CD8-positive, alpha-beta memory T cell (primary cell): ENCODE measurements at regions of chr10 and their contacts with region 1.

Region 1: DNA sequence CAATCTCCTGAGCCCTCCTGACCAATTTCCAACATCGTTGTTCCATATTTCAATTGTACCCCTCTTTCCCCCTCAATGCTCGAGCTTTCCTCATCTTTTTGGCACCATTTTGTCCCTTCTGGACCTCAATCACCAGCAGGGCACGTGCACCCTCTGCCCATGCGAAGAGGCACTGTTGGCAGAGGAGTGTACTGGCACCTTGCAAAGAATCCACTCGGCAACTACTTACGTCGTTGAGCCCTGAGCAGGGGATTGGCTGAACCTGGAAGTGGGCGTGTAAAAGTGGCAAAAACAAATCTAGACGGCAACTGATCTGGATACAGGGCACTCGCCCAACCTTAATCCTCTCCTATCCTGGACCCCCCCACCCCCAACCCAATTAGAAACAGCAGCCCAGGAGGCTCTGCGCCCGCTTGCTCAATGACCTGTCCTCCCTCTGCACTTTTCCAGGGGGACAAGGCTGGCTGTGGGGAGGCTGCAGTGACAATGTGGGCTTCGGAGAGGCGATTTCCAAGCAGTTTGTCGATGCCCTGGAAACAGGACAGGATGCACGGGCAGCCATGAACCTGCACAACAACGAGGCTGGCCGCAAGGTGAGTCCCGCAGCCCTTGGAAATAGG is 18.8 kb downstream of the WNT8B start:
- DNase-seq: peak; percentile 75 to 92 (median 88)
- H3K4me3 ChIP-seq: peak overlapping the region; percentile 60
- H3K4me3 Mint-ChIP-seq: peak overlapping the region; percentile 15 to 93 (median 78)
- H3K27ac ChIP-seq: no peak overlapping the region
- H3K27ac Mint-ChIP-seq: peak overlapping the region in 3 of 8 donors; percentile 21 to 53 (median 52)
- H3K4me1 ChIP-seq: no peaks in the 10 kb centered on the region
- H3K4me1 Mint-ChIP-seq: peaks cover 11 to 15% (median 12%) of the 10 kb centered on the region in 3 donors
- H3K27me3 ChIP-seq: peaks cover 7% of the 10 kb centered on the region
- H3K27me3 Mint-ChIP-seq: peaks cover 12 to 27% of the 10 kb centered on the region in 2 donors

Region 2: GRCh38 chr10:100046021-100046486 is 435.5 kb before region 1 on chr10:
- CTCF ChIA-PET with region 1: no interaction called
- POLR2A ChIA-PET with region 1: no interaction called
- DNase-seq: peak; percentile 52 to 83 (median 68)
- H3K4me3 ChIP-seq: no peak overlapping the region
- H3K4me3 Mint-ChIP-seq: peak overlapping the region in 1 of 7 donors; percentile 18
- H3K27ac ChIP-seq: no peak overlapping the region
- H3K27ac Mint-ChIP-seq: no peak overlapping the region
- H3K4me1 ChIP-seq: no peaks in the 10 kb centered on the region
- H3K4me1 Mint-ChIP-seq: no peaks in the 10 kb centered on the region
- H3K27me3 ChIP-seq: no peaks in the 10 kb centered on the region
- H3K27me3 Mint-ChIP-seq: peaks cover 1 to 16% of the 10 kb centered on the region in 2 donors

Region 3: GRCh38 chr10:100501423-100501822 is 19.9 kb after region 1 on chr10:
- CTCF ChIA-PET with region 1: interaction called, 42 read pairs
- POLR2A ChIA-PET with region 1: no interaction called
- DNase-seq: no peak
- H3K4me3 ChIP-seq: no peak overlapping the region
- H3K4me3 Mint-ChIP-seq: no peak overlapping the region
- H3K27ac ChIP-seq: no peak overlapping the region
- H3K27ac Mint-ChIP-seq: peak overlapping the region in 2 of 8 donors; percentile 41 to 91
- H3K4me1 ChIP-seq: no peaks in the 10 kb centered on the region
- H3K4me1 Mint-ChIP-seq: peaks cover under 1 to 13% (median 11%) of the 10 kb centered on the region in 3 donors
- H3K27me3 ChIP-seq: no peaks in the 10 kb centered on the region
- H3K27me3 Mint-ChIP-seq: no peaks in the 10 kb centered on the region

Region 4: GRCh38 chr10:100508691-100509150 is 27.1 kb after region 1 on chr10:
- CTCF ChIA-PET with region 1: interaction called, 80 read pairs
- POLR2A ChIA-PET with region 1: interaction called, 4 read pairs
- DNase-seq: peak in 3 of 5 donors; percentile 56 to 73 (median 63)
- H3K4me3 ChIP-seq: no peak overlapping the region
- H3K4me3 Mint-ChIP-seq: peak overlapping the region; percentile 0 to 78 (median 71)
- H3K27ac ChIP-seq: no peak overlapping the region
- H3K27ac Mint-ChIP-seq: peak overlapping the region; percentile 65 to 97 (median 92)
- H3K4me1 ChIP-seq: peaks cover 50% of the 10 kb centered on the region
- H3K4me1 Mint-ChIP-seq: peaks cover 63 to 68% (median 63%) of the 10 kb centered on the region in 3 donors
- H3K27me3 ChIP-seq: no peaks in the 10 kb centered on the region
- H3K27me3 Mint-ChIP-seq: no peaks in the 10 kb centered on the region

Region 5: GRCh38 chr10:100524638-100525037 is 43.1 kb after region 1 on chr10:
- CTCF ChIA-PET with region 1: interaction called, 44 read pairs
- POLR2A ChIA-PET with region 1: no interaction called
- DNase-seq: no peak
- H3K4me3 ChIP-seq: no peak overlapping the region
- H3K4me3 Mint-ChIP-seq: peak overlapping the region in 1 of 7 donors; percentile 29
- H3K27ac ChIP-seq: no peak overlapping the region
- H3K27ac Mint-ChIP-seq: peak overlapping the region in 2 of 8 donors; percentile 70 to 73
- H3K4me1 ChIP-seq: peaks cover 29% of the 10 kb centered on the region
- H3K4me1 Mint-ChIP-seq: peaks cover 17 to 33% (median 32%) of the 10 kb centered on the region in 3 donors
- H3K27me3 ChIP-seq: no peaks in the 10 kb centered on the region
- H3K27me3 Mint-ChIP-seq: no peaks in the 10 kb centered on the region

Region 6: GRCh38 chr10:100535715-100536353 is 54.3 kb after region 1 on chr10 and contains the start of gene HIF1AN:
- CTCF ChIA-PET with region 1: interaction called, 18 read pairs
- POLR2A ChIA-PET with region 1: interaction called, 6 read pairs
- DNase-seq: peak; percentile 76 to 93 (median 89)
- H3K4me3 ChIP-seq: peak within 1 kb of the TSS; percentile 78
- H3K4me3 Mint-ChIP-seq: peak within 1 kb of the TSS in 1 of 7 donors; percentile 13
- H3K27ac ChIP-seq: peak within 1 kb of the TSS; percentile 58
- H3K27ac Mint-ChIP-seq: peak within 1 kb of the TSS in 5 of 8 donors; percentile 11 to 84 (median 47)
- H3K4me1 ChIP-seq: peaks cover 36% of the 10 kb centered on the region
- H3K4me1 Mint-ChIP-seq: peaks cover 10 to 13% (median 13%) of the 10 kb centered on the region in 3 donors
- H3K27me3 ChIP-seq: no peaks in the 10 kb centered on the region
- H3K27me3 Mint-ChIP-seq: peaks cover 0 to 1% of the 10 kb centered on the region in 2 donors
- total RNA-seq, gene HIF1AN: 48.6 to 52.8 TPM

Region 7: DNA sequence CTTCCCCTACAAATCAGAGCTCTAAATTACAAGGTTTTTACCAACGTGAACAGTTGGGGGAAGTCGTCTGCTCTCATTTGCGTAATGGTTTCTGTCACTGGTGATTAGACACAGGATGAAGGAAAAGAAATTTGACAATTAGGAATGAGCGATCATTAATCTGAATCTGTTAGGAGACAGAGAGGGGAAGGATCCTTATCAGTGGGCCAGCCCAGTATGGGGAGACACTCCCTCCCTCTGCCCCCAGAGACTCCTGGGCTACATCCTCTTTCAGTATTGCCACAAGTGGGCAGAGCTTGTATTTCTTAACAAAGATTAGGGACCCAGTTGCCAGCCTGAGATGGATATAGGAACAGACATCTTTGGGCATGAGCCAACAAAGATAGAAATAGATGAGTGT is 69.6 kb after region 1 on chr10:
- CTCF ChIA-PET with region 1: no interaction called
- POLR2A ChIA-PET with region 1: no interaction called
- DNase-seq: no peak
- H3K4me3 ChIP-seq: no peak overlapping the region
- H3K4me3 Mint-ChIP-seq: no peak overlapping the region
- H3K27ac ChIP-seq: no peak overlapping the region
- H3K27ac Mint-ChIP-seq: no peak overlapping the region
- H3K4me1 ChIP-seq: no peaks in the 10 kb centered on the region
- H3K4me1 Mint-ChIP-seq: peaks cover 0 to 2% (median 0%) of the 10 kb centered on the region in 3 donors
- H3K27me3 ChIP-seq: no peaks in the 10 kb centered on the region
- H3K27me3 Mint-ChIP-seq: no peaks in the 10 kb centered on the region

Region 8: GRCh38 chr10:100687143-100688003 is 205.8 kb after region 1 on chr10:
- CTCF ChIA-PET with region 1: no interaction called
- POLR2A ChIA-PET with region 1: no interaction called
- DNase-seq: no peak
- H3K4me3 ChIP-seq: no peak overlapping the region
- H3K4me3 Mint-ChIP-seq: peak overlapping the region in 1 of 7 donors; percentile 49
- H3K27ac ChIP-seq: no peak overlapping the region
- H3K27ac Mint-ChIP-seq: no peak overlapping the region
- H3K4me1 ChIP-seq: no peaks in the 10 kb centered on the region
- H3K4me1 Mint-ChIP-seq: peaks cover 0 to 14% (median 0%) of the 10 kb centered on the region in 3 donors
- H3K27me3 ChIP-seq: peaks cover 28% of the 10 kb centered on the region
- H3K27me3 Mint-ChIP-seq: peaks cover 52 to 84% of the 10 kb centered on the region in 2 donors